CD8-positive, alpha-beta T cell (primary cell): ENCODE measurements at regions of chr1 and their contacts with region 1.

Region 1: DNA sequence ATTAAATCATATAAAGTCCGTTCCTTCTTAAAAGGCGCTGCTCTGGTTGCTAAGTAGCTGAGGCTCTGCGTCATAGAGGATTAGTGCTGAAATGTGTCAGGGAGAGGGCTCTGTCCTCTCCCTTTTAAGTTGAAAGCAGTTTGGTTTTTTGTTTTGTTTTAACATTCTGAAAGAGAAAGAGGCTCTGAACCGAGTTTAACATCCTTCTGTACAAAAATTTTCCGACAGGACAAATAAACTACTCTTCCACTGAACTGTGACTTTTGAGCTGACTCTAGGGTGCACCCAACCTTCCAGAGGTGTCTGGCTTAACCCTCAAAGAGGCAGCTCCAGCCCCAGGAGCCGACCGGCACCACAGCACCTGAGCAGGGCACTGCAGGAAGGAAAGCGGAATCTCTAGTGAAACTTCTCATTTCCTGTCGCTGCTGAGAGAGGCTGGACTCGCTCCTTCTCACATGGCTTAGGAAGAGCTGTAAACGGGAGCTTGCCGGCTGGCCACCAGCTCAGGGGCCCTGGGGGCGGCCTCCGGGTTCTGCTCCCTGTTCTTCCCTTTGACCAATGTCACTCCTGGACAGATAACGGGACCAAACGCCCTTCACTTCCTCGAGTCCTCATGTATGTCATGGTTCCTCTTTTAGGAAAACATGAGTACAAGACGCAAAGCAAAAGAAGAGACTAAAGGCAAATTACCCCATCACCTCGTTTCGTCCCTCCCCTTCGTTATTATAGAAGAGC is 1.2 kb downstream of the VAV3 start:
- DNase-seq: peak; percentile 8 to 83 (median 43)
- ATAC-seq: peak; percentile 73
- H3K4me3 ChIP-seq: peak overlapping the region; percentile 67 to 91
- H3K4me3 Mint-ChIP-seq: peak overlapping the region; percentile 95
- H3K27ac ChIP-seq: peak overlapping the region; percentile 74 to 79
- H3K27ac Mint-ChIP-seq: peak overlapping the region; percentile 93
- H3K4me1 ChIP-seq: peaks cover 15% of the 10 kb centered on the region
- H3K4me1 Mint-ChIP-seq: peaks cover 28% of the 10 kb centered on the region
- H3K27me3 ChIP-seq: no peaks in the 10 kb centered on the region
- H3K27me3 Mint-ChIP-seq: no peaks in the 10 kb centered on the region
- CTCF ChIP-seq: no peak

Region 2: DNA sequence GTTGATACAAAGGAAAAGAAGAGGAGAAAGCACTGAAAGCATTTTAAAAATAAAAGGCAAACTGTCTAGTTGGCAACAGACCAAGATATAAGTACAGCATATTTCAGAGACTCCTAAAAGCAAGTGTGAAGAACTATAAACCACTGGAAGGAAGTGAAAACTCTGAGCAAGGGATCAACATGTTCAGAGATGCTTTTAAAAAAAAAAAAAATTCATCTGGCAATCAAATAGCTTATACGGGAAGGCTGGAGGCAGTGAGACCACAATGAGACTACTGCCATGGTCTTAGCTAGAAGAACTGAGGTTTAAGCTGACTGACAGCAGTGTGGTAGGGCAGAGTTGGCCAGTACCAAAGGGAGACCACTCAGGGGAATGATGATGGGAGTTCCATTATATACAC is 123.0 kb before region 1 on chr1:
- CTCF ChIA-PET with region 1: interaction called, 4 read pairs
- POLR2A ChIA-PET with region 1: interaction called, 6 read pairs
- intact Hi-C with region 1: loop called in 1 of 2 experiments (anchors 5 kb)
- DNase-seq: peak in 2 of 9 experiments; percentile 37 to 63
- ATAC-seq: peak; percentile 50
- H3K4me3 ChIP-seq: peak overlapping the region; percentile 2 to 6
- H3K4me3 Mint-ChIP-seq: peak overlapping the region; percentile 42
- H3K27ac ChIP-seq: peak overlapping the region in 1 of 2 experiments; percentile 73
- H3K27ac Mint-ChIP-seq: peak overlapping the region; percentile 81
- H3K4me1 ChIP-seq: peaks cover 64% of the 10 kb centered on the region
- H3K4me1 Mint-ChIP-seq: peaks cover 87% of the 10 kb centered on the region
- H3K27me3 ChIP-seq: no peaks in the 10 kb centered on the region
- H3K27me3 Mint-ChIP-seq: no peaks in the 10 kb centered on the region
- CTCF ChIP-seq: no peak

Region 3: GRCh38 chr1:107919953-107920352 is 43.8 kb before region 1 on chr1:
- CTCF ChIA-PET with region 1: no interaction called
- POLR2A ChIA-PET with region 1: no interaction called
- intact Hi-C with region 1: loop called in 1 of 2 experiments (anchors 2 kb)
- DNase-seq: no peak
- ATAC-seq: no peak
- H3K4me3 ChIP-seq: no peak overlapping the region
- H3K4me3 Mint-ChIP-seq: no peak overlapping the region
- H3K27ac ChIP-seq: peak overlapping the region in 1 of 2 experiments; percentile 5
- H3K27ac Mint-ChIP-seq: no peak overlapping the region
- H3K4me1 ChIP-seq: peaks cover 11% of the 10 kb centered on the region
- H3K4me1 Mint-ChIP-seq: peaks cover 27% of the 10 kb centered on the region
- H3K27me3 ChIP-seq: no peaks in the 10 kb centered on the region
- H3K27me3 Mint-ChIP-seq: no peaks in the 10 kb centered on the region
- CTCF ChIP-seq: no peak

Region 4: GRCh38 chr1:108079440-108080025 is 115.8 kb after region 1 on chr1:
- CTCF ChIA-PET with region 1: no interaction called
- POLR2A ChIA-PET with region 1: no interaction called
- intact Hi-C with region 1: loop called in 1 of 2 experiments (anchors 1 kb)
- DNase-seq: peak; percentile 6 to 79 (median 52)
- ATAC-seq: peak; percentile 67
- H3K4me3 ChIP-seq: no peak overlapping the region
- H3K4me3 Mint-ChIP-seq: peak overlapping the region; percentile 47
- H3K27ac ChIP-seq: peak overlapping the region; percentile 41 to 62
- H3K27ac Mint-ChIP-seq: peak overlapping the region; percentile 89
- H3K4me1 ChIP-seq: peaks cover 74% of the 10 kb centered on the region
- H3K4me1 Mint-ChIP-seq: peaks cover 79% of the 10 kb centered on the region
- H3K27me3 ChIP-seq: no peaks in the 10 kb centered on the region
- H3K27me3 Mint-ChIP-seq: no peaks in the 10 kb centered on the region
- CTCF ChIP-seq: no peak

Region 5: GRCh38 chr1:108125312-108126138 is 161.8 kb after region 1 on chr1:
- CTCF ChIA-PET with region 1: interaction called, 34 read pairs
- POLR2A ChIA-PET with region 1: interaction called, 5 read pairs
- intact Hi-C with region 1: loop called (anchors 1 to 5 kb)
- DNase-seq: peak; percentile 36 to 86 (median 67)
- ATAC-seq: peak; percentile 97
- H3K4me3 ChIP-seq: no peak overlapping the region
- H3K4me3 Mint-ChIP-seq: no peak overlapping the region
- H3K27ac ChIP-seq: no peak overlapping the region
- H3K27ac Mint-ChIP-seq: no peak overlapping the region
- H3K4me1 ChIP-seq: no peaks in the 10 kb centered on the region
- H3K4me1 Mint-ChIP-seq: peaks cover 4% of the 10 kb centered on the region
- H3K27me3 ChIP-seq: no peaks in the 10 kb centered on the region
- H3K27me3 Mint-ChIP-seq: no peaks in the 10 kb centered on the region
- CTCF ChIP-seq: peak; percentile 88

Region 6: GRCh38 chr1:108141621-108142020 is 177.9 kb after region 1 on chr1:
- CTCF ChIA-PET with region 1: no interaction called
- POLR2A ChIA-PET with region 1: no interaction called
- intact Hi-C with region 1: no loop called
- DNase-seq: no peak
- ATAC-seq: no peak
- H3K4me3 ChIP-seq: no peak overlapping the region
- H3K4me3 Mint-ChIP-seq: no peak overlapping the region
- H3K27ac ChIP-seq: no peak overlapping the region
- H3K27ac Mint-ChIP-seq: no peak overlapping the region
- H3K4me1 ChIP-seq: no peaks in the 10 kb centered on the region
- H3K4me1 Mint-ChIP-seq: no peaks in the 10 kb centered on the region
- H3K27me3 ChIP-seq: no peaks in the 10 kb centered on the region
- H3K27me3 Mint-ChIP-seq: no peaks in the 10 kb centered on the region
- CTCF ChIP-seq: no peak